ENCODE measurements at regions of chr12 and their contacts with region 1.

Region 1: DNA sequence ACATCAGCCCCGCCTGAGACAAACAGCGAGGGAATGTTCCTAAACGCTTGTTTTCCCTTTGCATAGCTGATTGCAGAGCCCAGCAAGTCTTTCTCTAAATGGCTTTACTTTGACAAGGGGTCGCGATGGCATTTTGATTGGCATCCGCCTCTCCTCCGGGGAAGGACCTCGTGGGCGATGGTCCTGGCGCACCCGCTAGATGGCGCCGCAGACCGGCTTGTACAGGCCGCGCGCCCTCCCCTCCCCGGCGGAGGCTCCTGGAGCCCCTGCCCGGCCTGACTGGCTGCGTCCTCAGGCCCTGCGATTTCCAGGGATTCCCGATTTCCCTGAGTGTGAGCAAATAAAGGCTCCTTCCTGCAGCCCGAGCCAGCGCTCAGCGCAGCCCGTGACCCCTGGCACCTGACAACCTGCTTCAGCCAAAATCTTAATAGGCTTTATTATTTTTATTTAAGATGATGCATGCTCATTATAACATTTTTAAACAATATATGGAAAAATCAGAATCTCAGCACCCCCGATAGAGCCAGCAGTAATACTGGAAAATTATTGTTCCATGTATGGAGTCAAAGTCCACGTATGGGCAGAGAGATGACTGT is 468.3 kb downstream of the AACS start:
- DNase-seq: peak; percentile 48
- ATAC-seq: peak; percentile 76

Region 2: DNA sequence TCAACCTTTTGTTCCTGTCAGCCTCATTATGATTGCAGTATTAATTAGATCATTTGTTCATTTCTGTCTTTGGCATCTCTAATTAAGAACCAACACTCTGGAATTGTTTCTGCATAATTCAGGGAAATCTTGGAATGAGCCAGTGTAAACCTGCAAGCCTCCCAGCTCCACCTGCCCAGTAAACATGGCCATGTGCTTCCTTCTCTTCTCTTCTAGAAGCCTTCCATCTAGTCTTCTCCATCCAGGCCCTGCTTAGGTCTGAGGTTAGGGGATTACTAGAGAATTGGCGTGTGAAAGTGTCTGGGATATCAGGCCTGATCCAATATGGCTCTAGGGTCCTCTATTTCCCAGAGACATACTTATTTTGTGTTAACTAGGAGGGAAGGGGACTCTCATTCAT is 59.7 kb after region 1 on chr12:
- intact Hi-C with region 1: no loop called
- DNase-seq: no peak
- ATAC-seq: no peak

Region 3: GRCh38 chr12:126747530-126748149 is 1214.1 kb after region 1 on chr12:
- intact Hi-C with region 1: loop called (anchors 5 kb)
- DNase-seq: peak; percentile 47
- ATAC-seq: peak; percentile 66

Region 4: GRCh38 chr12:126874427-126875026 is 1341.0 kb after region 1 on chr12:
- intact Hi-C with region 1: loop called (anchors 10 kb)
- DNase-seq: peak; percentile 71
- ATAC-seq: peak; percentile 68